Activated CD4-positive, alpha-beta T cell treated with anti-CD3 and anti-CD28 coated beads, Interleukin-2, amount 10 ng/mL, durations not matched to agents 7 days and 5 days (primary cell): ENCODE measurements at regions of chr15 and their contacts with region 1.

Region 1: DNA sequence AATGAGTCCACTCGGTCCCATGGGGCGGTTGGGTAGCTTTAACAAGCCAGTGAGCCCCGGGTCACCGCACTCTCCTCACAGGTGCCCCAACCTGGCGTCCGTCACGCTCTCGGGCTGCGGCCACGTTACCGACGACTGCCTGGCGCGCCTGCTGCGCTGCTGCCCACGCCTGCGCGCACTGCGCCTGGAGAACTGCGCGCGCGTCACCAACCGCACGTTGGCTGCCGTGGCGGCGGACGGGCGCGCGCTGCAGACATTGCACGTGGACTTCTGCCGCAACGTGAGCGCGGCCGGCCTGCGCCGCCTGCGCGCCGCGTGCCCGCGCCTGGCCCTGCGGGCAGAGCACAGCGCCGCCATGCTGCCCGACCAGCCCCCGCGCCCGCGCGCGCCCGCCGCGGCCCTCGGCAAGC is 3.4 kb downstream of the FBXL22 start:
- DNase-seq: peak; percentile 89
- H3K4me3 Mint-ChIP-seq: peak overlapping the region; percentile 92
- H3K27ac Mint-ChIP-seq: peak overlapping the region; percentile 95
- H3K4me1 Mint-ChIP-seq: peaks cover 58% of the 10 kb centered on the region
- H3K27me3 Mint-ChIP-seq: no peaks in the 10 kb centered on the region

Region 2: GRCh38 chr15:64067564-64068030 is 467.0 kb after region 1 on chr15:
- CTCF ChIA-PET with region 1: interaction called, 7 read pairs
- POLR2A ChIA-PET with region 1: interaction called, 11 read pairs
- DNase-seq: peak; percentile 73
- H3K4me3 Mint-ChIP-seq: no peak overlapping the region
- H3K27ac Mint-ChIP-seq: peak overlapping the region; percentile 56
- H3K4me1 Mint-ChIP-seq: peaks cover 19% of the 10 kb centered on the region
- H3K27me3 Mint-ChIP-seq: no peaks in the 10 kb centered on the region